Mammary epithelial cell (primary cell): ENCODE measurements at regions of chr11 and their contacts with region 1.

Region 1: GRCh38 chr11:69274531-69275255 is 19.3 kb upstream of the MYEOV start:
- DNase-seq: peak; percentile 94
- H3K4me3 ChIP-seq: no peak overlapping the region
- H3K27ac ChIP-seq: peak overlapping the region; percentile 54
- H3K4me1 ChIP-seq: peaks cover 15% of the 10 kb centered on the region
- H3K27me3 ChIP-seq: no peaks in the 10 kb centered on the region
- CTCF ChIP-seq: no peak

Region 2: GRCh38 chr11:69253028-69253427 is 21.7 kb before region 1 on chr11:
- CTCF ChIA-PET with region 1: no interaction called
- dilution Hi-C with region 1: no loop called
- in situ Hi-C with region 1: no loop called
- intact Hi-C with region 1: loop called (anchors 2 kb)
- DNase-seq: peak; percentile 86
- H3K4me3 ChIP-seq: no peak overlapping the region
- H3K27ac ChIP-seq: no peak overlapping the region
- H3K4me1 ChIP-seq: peaks cover 17% of the 10 kb centered on the region
- H3K27me3 ChIP-seq: no peaks in the 10 kb centered on the region
- CTCF ChIP-seq: no peak